Breast epithelium (tissue), 4 donors: ENCODE measurements at regions of chr20 and their contacts with region 1.

Region 1: DNA sequence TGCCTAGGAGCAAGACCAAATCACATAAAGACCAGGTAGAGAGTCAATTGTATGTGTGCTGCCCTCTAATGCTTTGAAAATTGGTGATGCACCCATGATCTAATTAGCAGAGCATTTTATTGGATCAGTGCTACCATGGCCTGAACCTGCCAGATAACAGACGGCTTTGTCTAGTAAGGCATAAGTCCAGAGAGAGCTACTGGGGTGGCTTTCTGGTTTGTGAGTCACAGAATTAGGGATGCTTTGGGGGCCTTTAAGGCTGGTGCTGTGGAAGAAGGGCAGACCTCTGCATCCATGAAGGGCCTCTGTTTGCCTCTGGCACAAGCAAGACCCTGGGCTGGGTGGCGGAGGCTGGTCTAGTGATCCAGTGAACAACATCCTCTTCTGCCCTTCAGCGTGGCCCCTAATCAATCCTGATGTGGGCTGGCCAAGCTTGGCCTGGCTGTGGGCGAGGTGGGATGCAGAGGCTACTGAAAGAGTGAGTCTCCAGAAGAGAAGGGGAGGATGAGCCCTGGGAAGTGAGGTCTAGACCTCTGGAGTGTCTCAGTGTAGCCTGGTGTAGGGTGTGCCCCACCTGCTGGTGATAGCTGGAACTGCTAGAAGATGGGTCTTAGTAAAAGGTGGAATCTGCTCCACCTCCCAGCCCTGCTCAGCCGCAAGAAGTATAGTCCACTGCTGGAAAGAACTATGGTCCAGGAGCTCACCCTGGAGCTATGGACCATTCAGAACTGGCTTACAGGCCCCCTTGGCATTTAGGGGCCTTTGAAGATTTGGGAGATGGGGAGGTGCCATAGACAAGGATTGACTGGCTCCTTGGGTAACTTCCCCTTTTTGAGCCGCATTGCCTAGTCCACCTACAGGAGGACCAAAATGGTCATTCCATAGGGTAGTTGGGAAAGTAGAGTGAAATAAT is 36.7 kb upstream of the AAR2 start:
- DNase-seq: peak; percentile 71 to 83
- H3K4me3 ChIP-seq: no peak overlapping the region
- H3K27ac ChIP-seq: no peak overlapping the region
- H3K4me1 ChIP-seq: no peaks in the 10 kb centered on the region
- H3K27me3 ChIP-seq: no peaks in the 10 kb centered on the region
- CTCF ChIP-seq: peak; percentile 55 to 90 (median 89)
- POLR2A ChIP-seq: no peak

Region 2: DNA sequence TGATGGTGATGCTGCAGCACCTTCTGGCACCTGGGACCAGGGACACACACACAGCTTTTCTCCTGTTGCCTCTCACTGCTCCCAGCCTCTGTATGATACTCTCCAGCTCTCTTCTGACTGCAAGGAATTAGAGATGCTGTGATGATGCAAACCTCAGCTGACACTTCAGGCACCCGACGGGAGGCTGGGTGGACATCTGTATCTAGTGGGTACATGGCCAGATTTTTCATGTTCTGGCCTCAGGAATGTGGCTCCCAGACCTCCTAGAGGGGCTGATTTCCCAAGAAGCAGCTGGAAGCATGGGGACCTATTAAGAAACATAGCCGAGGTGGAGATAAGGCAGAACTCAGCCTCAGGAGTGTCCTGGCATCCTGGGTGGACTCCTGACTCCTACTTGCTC is 51.9 kb before region 1 on chr20:
- intact Hi-C with region 1: loop called (anchors 2 kb)
- DNase-seq: no peak
- H3K4me3 ChIP-seq: no peak overlapping the region
- H3K27ac ChIP-seq: peak overlapping the region; percentile 26 to 42
- H3K4me1 ChIP-seq: no peaks in the 10 kb centered on the region
- H3K27me3 ChIP-seq: no peaks in the 10 kb centered on the region
- CTCF ChIP-seq: no peak
- POLR2A ChIP-seq: no peak

Region 3: DNA sequence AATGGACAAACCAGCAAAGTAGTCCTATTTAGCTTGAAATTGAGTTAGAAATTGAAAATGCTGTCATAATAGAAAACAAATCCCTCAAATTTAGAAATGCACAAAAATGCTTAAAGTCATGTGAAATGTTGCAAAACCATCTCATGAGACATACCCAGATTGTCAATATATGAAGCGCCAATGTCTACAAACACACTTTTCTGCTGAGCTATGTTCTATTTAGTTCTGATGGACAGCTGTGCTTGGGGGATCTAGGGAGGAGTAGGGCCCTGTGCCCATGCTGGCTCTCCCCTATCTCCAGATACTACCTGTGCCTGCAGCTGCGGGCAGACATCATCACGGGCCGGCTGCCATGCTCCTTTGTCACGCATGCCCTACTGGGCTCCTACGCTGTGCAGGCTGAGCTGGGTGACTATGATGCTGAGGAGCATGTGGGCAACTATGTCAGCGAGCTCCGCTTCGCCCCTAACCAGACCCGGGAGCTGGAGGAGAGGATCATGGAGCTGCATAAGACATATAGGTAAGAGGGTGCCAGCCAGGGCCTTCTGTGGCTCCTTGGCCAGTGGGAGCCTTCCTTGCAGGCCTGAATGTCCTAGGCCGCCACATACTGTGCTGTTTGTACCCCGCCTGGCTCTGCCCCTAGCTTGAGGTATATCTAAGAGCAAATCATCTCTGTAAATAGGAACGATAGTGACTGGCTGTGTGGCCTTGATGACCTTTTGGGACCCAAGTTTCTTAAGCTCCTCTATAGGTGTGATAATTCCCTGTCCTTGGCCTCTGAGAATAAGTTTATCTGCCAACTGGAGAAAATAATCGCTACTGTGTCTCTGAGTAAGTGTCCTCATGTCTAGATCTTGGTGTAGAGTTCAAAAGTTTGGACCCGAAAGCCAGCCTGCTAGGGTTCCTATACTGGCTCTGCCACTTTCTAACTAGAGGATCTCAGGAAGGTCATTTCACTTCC is 14.5 kb before region 1 on chr20:
- intact Hi-C with region 1: loop called (anchors 1 kb)
- DNase-seq: no peak
- H3K4me3 ChIP-seq: no peak overlapping the region
- H3K27ac ChIP-seq: no peak overlapping the region
- H3K4me1 ChIP-seq: no peaks in the 10 kb centered on the region
- H3K27me3 ChIP-seq: no peaks in the 10 kb centered on the region
- CTCF ChIP-seq: no peak
- POLR2A ChIP-seq: no peak

Region 4: GRCh38 chr20:36658300-36658699 is 458.7 kb after region 1 on chr20:
- intact Hi-C with region 1: no loop called
- DNase-seq: no peak
- H3K4me3 ChIP-seq: no peak overlapping the region
- H3K27ac ChIP-seq: no peak overlapping the region
- H3K4me1 ChIP-seq: no peaks in the 10 kb centered on the region
- H3K27me3 ChIP-seq: no peaks in the 10 kb centered on the region
- CTCF ChIP-seq: no peak
- POLR2A ChIP-seq: no peak